ENCODE measurements at regions of chr9 and their contacts with region 1.

Region 1: GRCh38 chr9:128455849-128456612 is at the start of gene ODF2:
- DNase-seq: peak; percentile 99
- H3K4me3 ChIP-seq: peak within 1 kb of the TSS; percentile 68 to 95 (median 84)
- H3K27ac ChIP-seq: peak within 1 kb of the TSS; percentile 88 to 96 (median 91)
- H3K4me1 ChIP-seq: peaks cover 0 to 14% (median 9%) of the 10 kb centered on the region in 4 donors
- H3K27me3 ChIP-seq: no peaks in the 10 kb centered on the region
- CTCF ChIP-seq: no peak
- EP300 ChIP-seq: no peak
- POLR2A ChIP-seq: peak; percentile 16 to 41
- total RNA-seq, gene ODF2: 13.6 to 28.2 (median 20.2) TPM

Region 2: DNA sequence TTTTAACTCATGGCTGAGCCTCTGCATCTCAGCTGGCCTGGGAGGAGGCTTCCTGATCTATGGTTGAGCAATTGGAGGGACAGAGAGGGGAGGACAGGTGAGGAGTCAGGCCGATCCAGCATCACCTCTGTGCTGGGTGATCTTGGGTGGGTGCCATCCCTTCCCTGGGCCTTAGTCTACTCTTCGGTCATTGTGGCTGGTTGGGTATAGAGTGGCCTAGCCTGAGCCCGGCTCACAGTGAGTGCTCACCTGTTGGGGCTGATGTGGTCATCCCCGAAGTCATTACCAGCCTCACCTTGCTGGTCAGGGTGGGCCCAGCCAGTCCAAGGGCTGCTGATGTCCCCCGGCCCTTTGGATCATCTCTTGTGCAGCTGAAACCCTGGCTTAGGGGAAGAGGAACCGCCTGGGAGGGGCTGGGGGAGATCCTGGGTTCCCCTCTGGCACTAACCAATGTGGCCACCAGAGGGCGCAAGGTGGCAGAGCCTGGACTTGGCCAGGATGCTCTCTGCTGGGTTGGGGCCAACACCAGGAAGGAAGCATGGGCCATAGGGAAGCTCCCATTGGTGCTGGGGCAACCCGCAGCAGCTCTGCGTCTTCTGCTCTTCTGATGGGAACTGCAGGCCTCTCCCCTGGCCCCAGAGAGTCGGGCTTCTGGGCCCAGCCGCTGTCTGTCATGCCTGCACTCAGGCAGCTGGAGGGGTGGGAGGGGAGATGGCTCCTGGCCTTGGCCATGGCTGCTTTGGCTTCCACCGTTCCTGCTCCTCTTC is 17.5 kb before region 1 on chr9:
- intact Hi-C with region 1: loop called (anchors 2 kb)
- DNase-seq: peak; percentile 93
- H3K4me3 ChIP-seq: no peak overlapping the region
- H3K27ac ChIP-seq: no peak overlapping the region
- H3K4me1 ChIP-seq: peaks cover 0 to 8% (median 3%) of the 10 kb centered on the region in 4 donors
- H3K27me3 ChIP-seq: no peaks in the 10 kb centered on the region
- CTCF ChIP-seq: peak; percentile 82 to 94 (median 90)
- EP300 ChIP-seq: no peak
- POLR2A ChIP-seq: no peak

Region 3: GRCh38 chr9:128504485-128505413 is 48.7 kb after region 1 on chr9 and contains the start of gene GLE1:
- intact Hi-C with region 1: loop called (anchors 5 kb)
- DNase-seq: peak; percentile 96
- H3K4me3 ChIP-seq: peak within 1 kb of the TSS; percentile 75 to 92 (median 78)
- H3K27ac ChIP-seq: peak within 1 kb of the TSS; percentile 83 to 87 (median 86)
- H3K4me1 ChIP-seq: peaks cover 0 to 27% (median 21%) of the 10 kb centered on the region in 4 donors
- H3K27me3 ChIP-seq: no peaks in the 10 kb centered on the region
- CTCF ChIP-seq: no peak
- EP300 ChIP-seq: no peak
- POLR2A ChIP-seq: peak; percentile 51 to 63
- total RNA-seq, gene GLE1: 17.6 to 29.4 (median 20.9) TPM

Region 4: DNA sequence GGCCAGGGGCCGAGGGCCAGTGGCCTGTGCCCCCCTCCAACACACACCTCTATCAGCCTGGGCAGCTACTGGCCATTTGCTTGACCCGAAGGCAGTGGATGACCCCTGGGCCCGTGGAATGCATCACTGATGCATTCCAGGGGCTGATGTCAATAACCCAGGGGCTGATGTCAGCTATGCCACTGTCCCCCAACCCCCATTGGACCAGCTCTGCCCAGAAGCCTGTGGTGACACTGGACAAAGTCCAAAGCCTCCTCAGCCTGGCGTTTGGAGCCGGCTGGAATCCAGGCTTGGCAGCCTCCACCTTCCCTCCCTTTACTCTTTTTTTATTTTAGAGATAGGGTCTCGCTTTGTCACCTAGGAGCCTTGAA is 419.7 kb after region 1 on chr9:
- intact Hi-C with region 1: no loop called
- DNase-seq: peak; percentile 54
- H3K4me3 ChIP-seq: no peak overlapping the region
- H3K27ac ChIP-seq: no peak overlapping the region
- H3K4me1 ChIP-seq: peaks cover 0 to 8% (median 5%) of the 10 kb centered on the region in 4 donors
- H3K27me3 ChIP-seq: no peaks in the 10 kb centered on the region
- CTCF ChIP-seq: no peak
- EP300 ChIP-seq: no peak
- POLR2A ChIP-seq: no peak

Region 5: DNA sequence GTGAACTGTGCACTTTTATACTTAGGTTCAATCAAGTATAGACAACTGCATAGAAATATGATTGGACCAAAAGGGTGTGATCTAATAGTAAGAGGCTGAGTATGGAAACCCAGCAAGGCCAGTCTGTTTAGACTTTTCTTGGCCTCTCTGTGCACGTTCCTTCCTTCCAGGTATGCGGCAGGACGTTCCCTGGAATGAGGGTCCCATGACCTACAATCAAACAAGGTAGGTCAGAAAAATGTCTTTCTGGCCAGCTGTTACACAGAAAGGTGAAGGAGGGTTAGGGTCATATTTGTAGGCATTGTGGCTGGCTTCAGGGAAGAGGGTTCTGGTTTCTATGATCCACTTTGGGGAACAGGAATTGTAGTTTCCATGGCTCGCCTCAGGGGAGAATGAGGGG is 1080.0 kb after region 1 on chr9:
- intact Hi-C with region 1: no loop called
- DNase-seq: peak; percentile 8
- H3K4me3 ChIP-seq: no peak overlapping the region
- H3K27ac ChIP-seq: no peak overlapping the region
- H3K4me1 ChIP-seq: no peaks in the 10 kb centered on the region
- H3K27me3 ChIP-seq: no peaks in the 10 kb centered on the region
- CTCF ChIP-seq: no peak
- EP300 ChIP-seq: no peak
- POLR2A ChIP-seq: no peak

Measured in sigmoid colon (tissue), 7 donors.